ENCODE measurements at regions of chr19 and their contacts with region 1.

Region 1: DNA sequence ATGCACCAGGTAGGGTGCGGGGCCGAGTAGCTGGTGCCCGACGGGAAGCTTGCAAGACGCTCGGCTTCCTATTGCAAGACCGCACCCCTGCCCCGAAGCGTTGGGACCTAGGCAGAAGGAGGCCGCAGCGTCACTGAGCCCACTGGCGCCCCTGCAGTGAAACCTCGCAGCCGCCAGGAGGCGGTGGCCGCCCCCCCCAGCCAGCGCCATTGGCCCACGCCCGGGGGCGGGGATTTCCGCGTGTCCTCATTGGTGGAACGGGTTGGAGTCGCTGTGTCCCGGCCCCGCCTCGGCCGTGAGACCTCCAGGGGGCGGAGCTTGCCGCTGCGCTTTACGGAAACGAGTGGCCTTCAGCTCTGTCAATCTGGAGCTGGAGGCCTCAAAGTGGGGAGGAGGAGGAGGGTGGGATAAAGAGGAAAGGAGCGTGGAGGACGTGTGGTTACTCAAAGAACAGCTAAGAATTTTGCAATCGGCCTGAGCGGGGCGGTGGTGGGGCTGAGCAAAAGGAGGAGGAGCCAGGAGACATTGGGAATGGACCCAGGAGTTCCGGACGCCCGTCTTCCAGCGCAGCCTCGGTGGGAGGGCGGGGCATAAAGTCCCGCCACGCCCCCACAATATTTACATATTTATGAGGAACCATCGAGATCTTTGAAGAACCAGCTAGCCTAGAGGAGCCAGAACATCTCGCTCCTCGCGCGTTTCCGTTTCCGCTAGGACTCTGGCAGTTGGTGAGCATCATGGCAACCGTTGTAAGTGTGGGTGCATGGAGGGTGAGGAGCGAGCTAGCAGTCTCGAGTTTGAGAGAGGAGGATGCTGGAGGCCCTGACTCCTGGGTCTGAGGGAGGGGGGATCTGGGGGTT is at the starts of genes GYS1 and RUVBL2:
- DNase-seq: peak; percentile 99
- H3K4me3 Mint-ChIP-seq: peak within 1 kb of the TSS; percentile 83
- H3K27ac Mint-ChIP-seq: peak within 1 kb of the TSS; percentile 94
- H3K4me1 Mint-ChIP-seq: peaks cover 44% of the 10 kb centered on the region
- H3K27me3 Mint-ChIP-seq: no peaks in the 10 kb centered on the region
- total RNA-seq, gene GYS1: 29.6 to 31.2 TPM
- total RNA-seq, gene RUVBL2: 119 to 126 TPM

Region 2: GRCh38 chr19:48646001-48646721 is 347.2 kb before region 1 on chr19 and contains the start of gene CA11:
- CTCF ChIA-PET with region 1: no interaction called
- intact Hi-C with region 1: loop called (anchors 5 kb)
- DNase-seq: peak; percentile 95
- H3K4me3 Mint-ChIP-seq: peak within 1 kb of the TSS; percentile 78
- H3K27ac Mint-ChIP-seq: peak within 1 kb of the TSS; percentile 80
- H3K4me1 Mint-ChIP-seq: peaks cover 31% of the 10 kb centered on the region
- H3K27me3 Mint-ChIP-seq: no peaks in the 10 kb centered on the region
- total RNA-seq, gene CA11: 12.0 to 14.9 TPM

Region 3: GRCh38 chr19:48795055-48795684 is 198.2 kb before region 1 on chr19:
- CTCF ChIA-PET with region 1: interaction called, 3 read pairs
- intact Hi-C with region 1: loop called (anchors 2 kb)
- DNase-seq: peak; percentile 89
- H3K4me3 Mint-ChIP-seq: peak overlapping the region; percentile 82
- H3K27ac Mint-ChIP-seq: peak overlapping the region; percentile 87
- H3K4me1 Mint-ChIP-seq: peaks cover 10% of the 10 kb centered on the region
- H3K27me3 Mint-ChIP-seq: no peaks in the 10 kb centered on the region

Region 4: GRCh38 chr19:48965040-48965805 is 28.2 kb before region 1 on chr19 and contains the start of gene FTL:
- CTCF ChIA-PET with region 1: interaction called, 11 read pairs
- intact Hi-C with region 1: loop called (anchors 1 kb)
- DNase-seq: peak; percentile 93
- H3K4me3 Mint-ChIP-seq: peak within 1 kb of the TSS; percentile 100
- H3K27ac Mint-ChIP-seq: peak within 1 kb of the TSS; percentile 97
- H3K4me1 Mint-ChIP-seq: peaks cover 56% of the 10 kb centered on the region
- H3K27me3 Mint-ChIP-seq: no peaks in the 10 kb centered on the region
- total RNA-seq, gene FTL: 1,093 to 1,120 TPM

Region 5: DNA sequence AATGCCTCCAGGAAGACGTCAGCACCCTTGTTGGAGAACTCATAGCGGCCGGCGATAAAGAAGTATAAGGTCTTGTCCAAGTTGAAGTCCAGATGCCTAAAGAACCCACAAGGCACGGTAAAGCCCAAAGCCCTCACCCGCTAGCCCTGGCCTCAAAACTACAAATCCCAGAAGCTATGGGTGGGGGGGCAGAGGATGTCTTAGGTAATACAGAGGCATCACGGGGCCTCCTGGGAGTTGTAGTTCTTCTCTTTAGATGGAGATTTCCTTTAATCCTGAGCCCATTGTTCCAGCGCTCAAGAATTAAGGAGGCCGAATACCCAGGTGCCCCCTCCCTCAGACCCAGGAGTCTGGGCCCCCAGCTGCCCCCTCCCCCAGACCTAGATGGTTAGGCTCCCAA is 11.1 kb before region 1 on chr19:
- CTCF ChIA-PET with region 1: interaction called, 19 read pairs
- intact Hi-C with region 1: no loop called
- DNase-seq: no peak
- H3K4me3 Mint-ChIP-seq: no peak overlapping the region
- H3K27ac Mint-ChIP-seq: no peak overlapping the region
- H3K4me1 Mint-ChIP-seq: peaks cover 7% of the 10 kb centered on the region
- H3K27me3 Mint-ChIP-seq: no peaks in the 10 kb centered on the region

Region 6: DNA sequence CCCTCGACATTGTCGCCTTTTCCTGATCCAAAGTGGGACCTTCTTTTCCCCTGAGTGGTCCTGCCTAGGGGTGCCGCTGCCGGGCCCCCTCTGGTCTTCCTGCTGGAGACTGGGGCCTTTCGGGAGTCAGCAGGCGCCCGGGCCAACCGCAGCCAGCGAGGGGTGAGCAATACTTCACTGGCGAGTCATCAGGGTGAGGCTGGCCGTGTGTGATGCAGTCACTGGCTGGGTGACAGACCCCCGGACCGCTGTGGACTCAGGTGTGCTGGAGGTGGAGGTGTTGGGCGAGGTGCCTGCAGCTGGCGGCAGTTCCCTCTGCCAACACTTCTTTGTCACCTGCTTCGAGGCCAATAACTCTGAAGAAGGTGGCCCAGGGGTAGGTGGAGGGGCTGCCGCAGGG is 48.8 kb after region 1 on chr19:
- CTCF ChIA-PET with region 1: no interaction called
- intact Hi-C with region 1: no loop called
- DNase-seq: no peak
- H3K4me3 Mint-ChIP-seq: no peak overlapping the region
- H3K27ac Mint-ChIP-seq: no peak overlapping the region
- H3K4me1 Mint-ChIP-seq: no peaks in the 10 kb centered on the region
- H3K27me3 Mint-ChIP-seq: no peaks in the 10 kb centered on the region

Region 7: DNA sequence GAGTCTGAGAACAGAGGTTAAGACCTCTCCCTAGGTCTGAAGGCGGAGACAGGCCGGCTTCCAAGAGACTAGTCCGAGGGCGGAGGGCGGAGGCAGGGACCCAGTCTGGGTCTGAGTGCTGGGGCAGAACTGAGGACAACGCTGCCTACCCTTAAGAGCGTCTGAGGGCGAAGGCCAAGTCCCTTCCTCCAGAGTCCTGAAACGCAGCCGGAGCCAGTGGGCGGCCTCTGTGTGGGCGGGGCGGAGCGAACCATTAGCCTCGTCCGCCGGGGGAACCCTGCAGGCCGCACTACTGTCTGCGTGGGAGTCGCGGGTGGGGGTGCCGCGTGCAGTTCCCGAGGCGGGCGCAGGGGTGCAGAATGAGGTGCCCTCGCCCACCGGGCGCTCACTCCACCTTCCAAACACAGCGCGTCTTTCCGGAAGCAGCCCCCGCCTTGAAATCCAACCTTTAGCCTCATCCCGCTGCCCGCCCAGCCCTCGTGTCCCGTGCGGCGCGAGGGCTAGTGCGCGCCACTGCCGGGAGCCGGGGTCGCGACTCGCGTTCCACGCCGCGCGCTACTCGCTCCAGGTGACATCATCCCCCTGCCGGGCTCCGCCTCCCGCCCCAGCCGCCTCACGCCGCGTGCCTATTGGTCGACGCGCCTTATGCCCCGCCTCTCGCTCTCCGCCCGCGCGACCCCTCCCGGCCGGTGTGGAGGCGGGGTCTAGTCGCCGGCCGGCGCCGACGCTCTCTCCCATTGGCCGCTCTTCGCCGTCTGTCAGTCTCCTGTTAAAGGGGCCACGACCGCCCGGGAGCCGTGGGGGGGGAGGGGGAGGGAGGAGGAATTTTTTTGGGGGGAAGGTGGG is 125.4 kb after region 1 on chr19 and contains the start of gene C19orf73:
- CTCF ChIA-PET with region 1: interaction called, 8 read pairs
- intact Hi-C with region 1: loop called (anchors 2 kb)
- DNase-seq: peak; percentile 95
- H3K4me3 Mint-ChIP-seq: peak within 1 kb of the TSS; percentile 83
- H3K27ac Mint-ChIP-seq: peak within 1 kb of the TSS; percentile 86
- H3K4me1 Mint-ChIP-seq: peaks cover 32% of the 10 kb centered on the region
- H3K27me3 Mint-ChIP-seq: peaks cover 7% of the 10 kb centered on the region
- total RNA-seq, gene C19orf73: 1.5 to 1.9 TPM

Region 8: GRCh38 chr19:49155005-49155819 is 161.8 kb after region 1 on chr19 and contains the start of gene HRC:
- CTCF ChIA-PET with region 1: no interaction called
- intact Hi-C with region 1: no loop called
- DNase-seq: no peak
- H3K4me3 Mint-ChIP-seq: no peak within 1 kb of the TSS
- H3K27ac Mint-ChIP-seq: no peak within 1 kb of the TSS
- H3K4me1 Mint-ChIP-seq: peaks cover 14% of the 10 kb centered on the region
- H3K27me3 Mint-ChIP-seq: peaks cover 70% of the 10 kb centered on the region
- total RNA-seq, gene HRC: not detected

Region 9: DNA sequence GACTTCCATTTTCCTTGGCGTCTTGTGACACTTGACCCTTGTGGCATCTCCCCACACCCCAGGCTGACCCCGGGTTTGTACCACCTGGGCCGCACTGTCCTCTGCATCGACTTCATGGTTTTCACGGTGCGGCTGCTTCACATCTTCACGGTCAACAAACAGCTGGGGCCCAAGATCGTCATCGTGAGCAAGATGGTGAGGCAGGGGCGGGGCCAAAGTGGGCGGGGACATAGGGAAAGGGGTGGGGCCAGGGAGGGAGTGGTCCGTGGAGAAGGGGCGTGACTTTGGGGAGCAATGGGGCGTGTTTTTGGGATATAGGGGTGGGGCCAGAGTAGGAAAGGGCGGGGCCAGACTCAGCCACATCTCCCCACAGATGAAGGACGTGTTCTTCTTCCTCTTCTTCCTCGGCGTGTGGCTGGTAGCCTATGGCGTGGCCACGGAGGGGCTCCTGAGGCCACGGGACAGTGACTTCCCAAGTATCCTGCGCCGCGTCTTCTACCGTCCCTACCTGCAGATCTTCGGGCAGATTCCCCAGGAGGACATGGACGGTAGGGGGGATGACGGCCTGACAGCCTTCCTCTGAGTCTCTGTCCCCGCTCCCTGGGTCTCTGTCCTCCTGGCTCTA is 206.9 kb after region 1 on chr19:
- CTCF ChIA-PET with region 1: interaction called, 3 read pairs
- intact Hi-C with region 1: loop called (anchors 10 kb)
- DNase-seq: no peak
- H3K4me3 Mint-ChIP-seq: no peak overlapping the region
- H3K27ac Mint-ChIP-seq: no peak overlapping the region
- H3K4me1 Mint-ChIP-seq: peaks cover 2% of the 10 kb centered on the region
- H3K27me3 Mint-ChIP-seq: no peaks in the 10 kb centered on the region

Measured in activated naive CD4-positive, alpha-beta T cell treated with anti-CD3 and anti-CD28 coated beads for 36 hours (primary cell).